AG04450 (cell line): ENCODE measurements at regions of chr11 and their contacts with region 1.

Region 1: GRCh38 chr11:78416305-78417178 is 1.1 kb downstream of the GAB2 start:
- DNase-seq: peak; percentile 51
- H3K4me3 ChIP-seq: peak overlapping the region; percentile 68
- H3K27ac ChIP-seq: peak overlapping the region; percentile 97
- H3K27me3 ChIP-seq: no peaks in the 10 kb centered on the region
- CTCF ChIP-seq: peak; percentile 54

Region 2: GRCh38 chr11:78228467-78228866 is 188.1 kb before region 1 on chr11:
- CTCF ChIA-PET with region 1: interaction called, 17 read pairs
- POLR2A ChIA-PET with region 1: interaction called, 8 read pairs
- DNase-seq: peak; percentile 15
- H3K4me3 ChIP-seq: no peak overlapping the region
- H3K27ac ChIP-seq: no peak overlapping the region
- H3K27me3 ChIP-seq: no peaks in the 10 kb centered on the region
- CTCF ChIP-seq: peak; percentile 62

Region 3: GRCh38 chr11:78310500-78310909 is 106.0 kb before region 1 on chr11:
- CTCF ChIA-PET with region 1: interaction called, 12 read pairs
- POLR2A ChIA-PET with region 1: no interaction called
- DNase-seq: no peak
- H3K4me3 ChIP-seq: no peak overlapping the region
- H3K27ac ChIP-seq: no peak overlapping the region
- H3K27me3 ChIP-seq: no peaks in the 10 kb centered on the region
- CTCF ChIP-seq: no peak

Region 4: GRCh38 chr11:78622666-78623065 is 206.1 kb after region 1 on chr11:
- CTCF ChIA-PET with region 1: no interaction called
- POLR2A ChIA-PET with region 1: no interaction called
- DNase-seq: no peak
- H3K4me3 ChIP-seq: no peak overlapping the region
- H3K27ac ChIP-seq: no peak overlapping the region
- H3K27me3 ChIP-seq: peaks cover 3% of the 10 kb centered on the region
- CTCF ChIP-seq: no peak